Calu3 (cell line): ENCODE measurements at regions of chr5 and their contacts with region 1.

Region 1: GRCh38 chr5:89729623-89730301 is 679.8 kb downstream of the CETN3 start:
- DNase-seq: no peak
- H3K4me3 Mint-ChIP-seq: no peak overlapping the region
- H3K27ac Mint-ChIP-seq: no peak overlapping the region
- H3K4me1 Mint-ChIP-seq: peaks cover 9% of the 10 kb centered on the region
- H3K27me3 Mint-ChIP-seq: no peaks in the 10 kb centered on the region
- CTCF ChIP-seq: peak; percentile 41

Region 2: GRCh38 chr5:89255845-89256463 is 473.8 kb before region 1 on chr5:
- CTCF ChIA-PET with region 1: no interaction called
- intact Hi-C with region 1: loop called (anchors 5 kb)
- DNase-seq: no peak
- H3K4me3 Mint-ChIP-seq: no peak overlapping the region
- H3K27ac Mint-ChIP-seq: no peak overlapping the region
- H3K4me1 Mint-ChIP-seq: no peaks in the 10 kb centered on the region
- H3K27me3 Mint-ChIP-seq: no peaks in the 10 kb centered on the region
- CTCF ChIP-seq: no peak

Region 3: DNA sequence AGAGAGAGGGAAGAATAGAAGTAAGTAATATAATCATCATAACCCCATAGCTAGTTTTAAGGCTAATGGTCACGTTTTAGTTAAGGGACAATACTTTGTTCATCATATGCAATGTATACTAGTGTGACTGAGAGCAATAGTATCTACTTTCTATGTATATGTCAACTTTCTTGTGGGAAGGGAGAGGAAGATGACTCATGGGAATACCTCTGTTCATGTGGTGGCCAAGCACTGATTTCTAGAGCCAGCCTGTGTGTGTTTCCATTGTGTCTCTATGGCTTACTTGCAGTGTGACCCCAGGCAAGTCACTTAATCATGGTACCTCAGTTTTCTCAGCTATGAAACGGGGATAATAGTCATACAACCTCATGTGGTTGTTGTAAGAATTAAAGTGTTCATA is 40.2 kb after region 1 on chr5:
- CTCF ChIA-PET with region 1: no interaction called
- intact Hi-C with region 1: no loop called
- DNase-seq: no peak
- H3K4me3 Mint-ChIP-seq: no peak overlapping the region
- H3K27ac Mint-ChIP-seq: no peak overlapping the region
- H3K4me1 Mint-ChIP-seq: no peaks in the 10 kb centered on the region
- H3K27me3 Mint-ChIP-seq: no peaks in the 10 kb centered on the region
- CTCF ChIP-seq: no peak

Region 4: GRCh38 chr5:90655423-90655822 is 925.7 kb after region 1 on chr5:
- CTCF ChIA-PET with region 1: no interaction called
- intact Hi-C with region 1: no loop called
- DNase-seq: no peak
- H3K4me3 Mint-ChIP-seq: no peak overlapping the region
- H3K27ac Mint-ChIP-seq: no peak overlapping the region
- H3K4me1 Mint-ChIP-seq: no peaks in the 10 kb centered on the region
- H3K27me3 Mint-ChIP-seq: peaks cover 8% of the 10 kb centered on the region
- CTCF ChIP-seq: no peak